HEK293 (cell line): ENCODE measurements at regions of chr1 and their contacts with region 1.

Region 1: DNA sequence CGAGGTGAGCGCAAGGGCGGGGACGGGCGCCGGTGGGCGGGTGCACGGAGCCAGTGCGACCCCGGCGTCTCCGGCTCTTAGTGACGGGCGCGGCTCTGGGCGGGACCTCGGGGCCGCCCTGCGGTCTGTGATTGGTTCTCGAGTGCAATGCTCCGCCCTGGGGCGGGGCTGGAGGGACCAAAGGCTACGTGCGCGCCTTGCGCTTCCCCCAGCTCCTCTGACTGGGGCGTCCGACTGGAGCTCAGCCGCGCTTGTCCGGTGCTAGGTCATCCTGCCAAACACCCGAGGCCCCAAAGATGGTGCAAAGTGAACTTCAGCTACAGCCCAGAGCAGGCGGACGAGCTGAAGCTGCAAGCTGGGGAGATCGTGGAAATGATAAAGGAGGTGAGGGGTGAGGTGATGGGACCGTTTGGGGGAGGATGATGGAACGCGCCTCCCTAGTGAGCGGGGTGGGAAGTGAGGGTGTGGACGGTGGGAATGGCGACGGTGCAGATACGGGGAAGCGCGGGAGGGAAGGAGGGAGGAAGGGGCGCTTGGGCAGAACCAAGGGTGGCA is 811 bp downstream of the SH3D21 start:
- H3K4me3 ChIP-seq: peak overlapping the region; percentile 53
- H3K27ac ChIP-seq: peak overlapping the region; percentile 75; the same call in 1 of the 2 replicates
- H3K4me1 ChIP-seq: no peaks in the 10 kb centered on the region
- CTCF ChIP-seq: 0 out of 2 replicates have a peak, but pooled peaks have one; percentile 43

Region 2: DNA sequence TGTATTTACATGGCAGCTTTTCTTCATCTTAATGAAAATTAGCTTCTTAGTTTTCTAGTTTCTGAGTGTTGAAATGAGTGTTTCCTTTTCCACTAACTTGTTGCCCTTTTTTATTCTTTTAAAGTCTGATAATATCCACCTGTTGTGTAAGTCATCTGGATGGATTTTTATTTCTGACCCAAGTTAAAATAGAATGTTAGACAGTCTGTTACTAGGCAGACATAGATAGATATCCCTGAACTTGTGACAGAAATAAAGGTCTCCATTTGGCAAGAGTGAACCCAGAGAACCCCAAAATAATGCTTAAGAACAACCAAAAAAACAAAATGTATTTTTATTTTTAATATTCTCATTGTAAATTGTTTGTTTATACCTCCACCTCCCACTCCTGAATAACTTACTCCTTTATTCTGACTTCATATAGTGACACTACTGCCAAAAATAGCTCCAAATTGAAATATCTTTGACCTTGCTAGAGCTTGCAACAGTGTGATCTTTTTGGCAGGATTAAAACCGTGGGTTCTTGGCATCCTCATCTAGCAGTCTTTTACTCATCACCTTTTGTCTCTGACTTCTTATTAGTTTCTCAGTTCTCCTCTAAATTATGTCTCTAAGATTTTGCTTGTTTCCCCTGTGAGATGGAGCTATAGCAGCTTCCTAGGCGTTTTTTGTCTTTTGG is 27.7 kb before region 1 on chr1:
- CTCF ChIA-PET with region 1: no interaction called
- POLR2A ChIA-PET with region 1: no interaction called
- H3K4me3 ChIP-seq: no peak overlapping the region
- H3K27ac ChIP-seq: no peak overlapping the region
- H3K4me1 ChIP-seq: peaks cover 3% of the 10 kb centered on the region; the same call in 1 of the 2 replicates
- CTCF ChIP-seq: no peak

Region 3: GRCh38 chr1:36323597-36324352 is 16.8 kb after region 1 on chr1 and contains the start of gene EVA1B:
- CTCF ChIA-PET with region 1: interaction called, 3 read pairs
- POLR2A ChIA-PET with region 1: interaction called, 11 read pairs
- H3K4me3 ChIP-seq: peak within 1 kb of the TSS; percentile 53
- H3K27ac ChIP-seq: peak within 1 kb of the TSS; percentile 58; the same call in 1 of the 2 replicates
- H3K4me1 ChIP-seq: no peaks in the 10 kb centered on the region; the same call in 1 of the 2 replicates
- CTCF ChIP-seq: no peak